ENCODE measurements at regions of chr6 and their contacts with region 1.

Region 1: DNA sequence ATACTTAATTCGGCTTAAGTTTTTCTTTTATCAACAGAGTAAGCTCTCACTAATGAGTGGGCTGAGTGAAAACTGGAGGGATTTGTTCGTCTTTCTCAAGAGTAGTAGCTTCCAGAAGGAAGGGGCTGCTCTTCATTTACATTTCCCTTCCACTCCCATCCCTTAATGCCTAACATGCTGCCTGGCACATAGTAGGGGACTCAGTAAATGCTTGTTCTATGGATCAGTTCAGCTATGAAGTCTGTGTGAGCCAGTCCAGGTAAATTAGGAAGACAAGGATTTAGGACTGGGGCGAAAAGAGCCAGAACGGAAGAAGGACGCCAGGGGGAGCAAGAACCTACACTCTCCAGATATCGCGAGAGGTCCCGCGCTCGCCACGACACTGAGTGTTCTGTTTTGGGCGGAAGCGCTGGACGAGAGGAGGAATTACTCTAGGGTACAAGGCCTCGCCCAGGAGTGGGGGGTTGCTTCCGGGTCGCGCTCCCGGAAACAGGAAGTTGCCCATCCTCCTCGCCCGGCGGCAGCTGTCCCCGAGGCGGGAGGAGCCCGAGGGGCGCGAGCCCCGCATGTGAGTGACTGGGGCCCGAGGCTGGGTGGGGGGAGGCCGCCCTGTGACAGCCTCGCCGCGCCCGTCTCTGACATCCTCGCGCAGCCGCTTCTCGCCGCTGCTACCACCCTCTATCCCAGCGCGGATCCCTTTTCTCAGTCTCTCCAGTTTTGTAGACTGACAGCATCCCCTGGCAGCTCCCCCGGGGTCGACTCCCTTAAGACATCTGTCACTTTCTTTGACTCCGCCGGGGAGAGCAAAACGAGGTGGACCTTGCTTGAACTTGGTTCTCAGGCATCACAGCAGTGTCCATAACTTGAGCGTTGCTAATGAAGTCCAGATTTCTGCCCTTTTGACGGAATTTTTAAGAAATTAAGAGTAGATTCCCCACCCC is at the start of gene C6orf89:
- DNase-seq: peak; percentile 89
- ATAC-seq: peak; percentile 99
- H3K4me3 Mint-ChIP-seq: peak within 1 kb of the TSS; percentile 89
- H3K27ac Mint-ChIP-seq: peak within 1 kb of the TSS; percentile 94
- H3K4me1 Mint-ChIP-seq: peaks cover 30% of the 10 kb centered on the region
- H3K27me3 Mint-ChIP-seq: no peaks in the 10 kb centered on the region
- CTCF ChIP-seq: peak; percentile 34
- total RNA-seq, gene C6orf89: 29.7 and 30.3 TPM in 2 replicates

Region 2: GRCh38 chr6:36874443-36875249 is 11.1 kb before region 1 on chr6 and contains the start of gene PPIL1:
- CTCF ChIA-PET with region 1: interaction called, 34 read pairs
- POLR2A ChIA-PET with region 1: interaction called, 49 read pairs
- intact Hi-C with region 1: loop called (anchors 1 kb)
- DNase-seq: peak; percentile 83
- ATAC-seq: peak; percentile 94
- H3K4me3 Mint-ChIP-seq: peak within 1 kb of the TSS; percentile 98
- H3K27ac Mint-ChIP-seq: peak within 1 kb of the TSS; percentile 99
- H3K4me1 Mint-ChIP-seq: peaks cover 27% of the 10 kb centered on the region
- H3K27me3 Mint-ChIP-seq: no peaks in the 10 kb centered on the region
- CTCF ChIP-seq: no peak
- total RNA-seq, gene PPIL1: 23.4 and 27.0 TPM in 2 replicates

Region 3: DNA sequence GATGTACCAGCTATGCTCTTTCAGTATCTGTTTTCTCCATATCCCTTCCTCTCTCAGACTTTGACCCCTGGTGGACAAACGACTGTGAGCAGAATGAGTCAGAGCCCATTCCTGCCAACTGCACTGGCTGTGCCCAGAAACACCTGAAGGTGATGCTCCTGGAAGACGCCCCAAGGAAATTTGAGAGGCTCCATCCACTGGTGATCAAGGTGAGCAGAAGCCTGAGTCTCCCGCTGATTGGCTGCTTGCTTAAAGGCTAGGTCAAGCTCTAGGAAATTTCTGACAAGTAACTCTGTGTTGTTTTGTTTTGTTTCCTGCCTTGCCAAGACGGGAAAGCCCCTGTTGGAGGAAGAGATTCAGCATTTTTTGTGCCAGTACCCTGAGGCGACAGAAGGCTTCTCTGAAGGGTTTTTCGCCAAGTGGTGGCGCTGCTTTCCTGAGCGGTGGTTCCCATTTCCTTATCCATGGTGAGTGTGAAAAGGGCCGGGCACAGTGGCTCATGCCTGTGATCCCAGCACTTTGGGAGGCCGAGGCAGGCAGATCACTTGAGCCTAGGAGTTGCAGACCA is 28.6 kb after region 1 on chr6:
- CTCF ChIA-PET with region 1: no interaction called
- POLR2A ChIA-PET with region 1: no interaction called
- intact Hi-C with region 1: no loop called
- DNase-seq: no peak
- ATAC-seq: no peak
- H3K4me3 Mint-ChIP-seq: no peak overlapping the region
- H3K27ac Mint-ChIP-seq: no peak overlapping the region
- H3K4me1 Mint-ChIP-seq: peaks cover 14% of the 10 kb centered on the region
- H3K27me3 Mint-ChIP-seq: no peaks in the 10 kb centered on the region
- CTCF ChIP-seq: no peak

Region 4: GRCh38 chr6:36979347-36979742 is 93.6 kb after region 1 on chr6:
- CTCF ChIA-PET with region 1: interaction called, 7 read pairs
- POLR2A ChIA-PET with region 1: no interaction called
- intact Hi-C with region 1: loop called (anchors 2 kb)
- DNase-seq: no peak
- ATAC-seq: peak; percentile 58
- H3K4me3 Mint-ChIP-seq: no peak overlapping the region
- H3K27ac Mint-ChIP-seq: no peak overlapping the region
- H3K4me1 Mint-ChIP-seq: peaks cover 30% of the 10 kb centered on the region
- H3K27me3 Mint-ChIP-seq: no peaks in the 10 kb centered on the region
- CTCF ChIP-seq: no peak

Region 5: GRCh38 chr6:37029249-37029971 is 143.7 kb after region 1 on chr6:
- CTCF ChIA-PET with region 1: interaction called, 10 read pairs
- POLR2A ChIA-PET with region 1: interaction called, 6 read pairs
- intact Hi-C with region 1: no loop called
- DNase-seq: no peak
- ATAC-seq: peak; percentile 63
- H3K4me3 Mint-ChIP-seq: no peak overlapping the region
- H3K27ac Mint-ChIP-seq: peak overlapping the region; percentile 68
- H3K4me1 Mint-ChIP-seq: peaks cover 50% of the 10 kb centered on the region
- H3K27me3 Mint-ChIP-seq: no peaks in the 10 kb centered on the region
- CTCF ChIP-seq: no peak

Region 6: DNA sequence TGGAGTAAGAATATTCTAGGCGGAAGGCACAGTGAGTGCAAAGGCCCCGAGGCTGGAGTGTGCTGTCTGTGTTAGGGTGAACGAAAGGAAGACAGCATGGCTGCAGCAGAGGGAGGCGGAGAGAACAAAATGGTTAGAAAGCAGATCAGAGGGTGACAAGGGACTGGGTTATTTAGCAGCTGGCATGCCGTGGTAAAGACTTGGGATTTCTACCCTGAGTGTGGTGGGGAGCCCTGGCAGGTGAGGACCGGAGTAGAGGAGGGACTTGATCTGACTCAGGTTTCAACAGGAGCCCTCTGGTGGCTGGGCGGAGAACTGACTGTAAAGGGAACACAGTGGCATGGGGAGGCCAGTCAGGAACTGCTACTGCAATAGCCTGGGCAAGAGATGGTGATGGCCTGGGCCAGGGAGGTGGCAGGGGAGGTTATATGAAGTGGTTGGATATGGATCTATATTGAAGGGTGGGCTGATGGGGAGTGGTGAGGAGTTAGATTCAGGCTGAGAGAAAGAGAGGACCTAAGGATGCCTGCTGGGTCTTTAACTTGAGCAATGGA is 322.2 kb after region 1 on chr6:
- CTCF ChIA-PET with region 1: interaction called, 27 read pairs
- POLR2A ChIA-PET with region 1: interaction called, 5 read pairs
- intact Hi-C with region 1: loop called (anchors 1 kb)
- DNase-seq: peak; percentile 79
- ATAC-seq: peak; percentile 97
- H3K4me3 Mint-ChIP-seq: no peak overlapping the region
- H3K27ac Mint-ChIP-seq: peak overlapping the region; percentile 5
- H3K4me1 Mint-ChIP-seq: peaks cover 20% of the 10 kb centered on the region
- H3K27me3 Mint-ChIP-seq: no peaks in the 10 kb centered on the region
- CTCF ChIP-seq: no peak